ENCODE measurements at regions of chr3 and their contacts with region 1.

Region 1: DNA sequence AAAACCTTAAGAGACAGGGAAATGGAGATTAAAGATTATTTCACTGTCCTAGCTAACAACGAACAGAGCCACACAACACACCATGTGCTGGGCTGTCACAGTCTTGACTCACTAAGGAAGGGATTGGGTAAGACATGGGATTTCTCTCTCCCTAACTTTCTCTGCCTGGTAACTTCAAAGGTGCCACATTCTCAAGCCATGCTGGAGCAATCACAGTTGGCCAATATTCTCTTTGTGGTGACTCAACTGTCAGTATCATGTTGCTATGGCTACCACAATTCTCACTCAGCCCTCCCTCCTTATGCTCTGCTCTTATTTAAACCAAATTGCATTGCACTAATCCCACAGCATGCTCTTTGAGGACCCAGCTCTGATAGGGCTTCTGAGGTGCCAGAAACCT is 74.0 kb downstream of the OXNAD1 start:
- DNase-seq: peak in 4 of 9 experiments; percentile 8 to 79 (median 51)
- ATAC-seq: peak; percentile 64
- H3K4me3 ChIP-seq: no peak overlapping the region
- H3K4me3 Mint-ChIP-seq: no peak overlapping the region
- H3K27ac ChIP-seq: peak overlapping the region; percentile 41 to 72
- H3K27ac Mint-ChIP-seq: peak overlapping the region; percentile 87
- H3K4me1 ChIP-seq: peaks cover 43% of the 10 kb centered on the region
- H3K4me1 Mint-ChIP-seq: peaks cover 83% of the 10 kb centered on the region
- H3K27me3 ChIP-seq: no peaks in the 10 kb centered on the region
- H3K27me3 Mint-ChIP-seq: no peaks in the 10 kb centered on the region
- CTCF ChIP-seq: no peak

Region 2: GRCh38 chr3:15797642-15798303 is 541.2 kb before region 1 on chr3 and contains the start of gene ANKRD28:
- CTCF ChIA-PET with region 1: no interaction called
- POLR2A ChIA-PET with region 1: no interaction called
- intact Hi-C with region 1: no loop called
- DNase-seq: peak in 3 of 9 experiments; percentile 15 to 65 (median 51)
- ATAC-seq: peak; percentile 50
- H3K4me3 ChIP-seq: peak within 1 kb of the TSS in 1 of 2 experiments; percentile 36
- H3K4me3 Mint-ChIP-seq: peak within 1 kb of the TSS; percentile 74
- H3K27ac ChIP-seq: peak within 1 kb of the TSS in 1 of 2 experiments; percentile 72
- H3K27ac Mint-ChIP-seq: peak within 1 kb of the TSS; percentile 80
- H3K4me1 ChIP-seq: peaks cover 40% of the 10 kb centered on the region
- H3K4me1 Mint-ChIP-seq: peaks cover 76% of the 10 kb centered on the region
- H3K27me3 ChIP-seq: no peaks in the 10 kb centered on the region
- H3K27me3 Mint-ChIP-seq: no peaks in the 10 kb centered on the region
- CTCF ChIP-seq: no peak
- total RNA-seq, gene ANKRD28: 35.1 to 39.5 TPM

Region 3: DNA sequence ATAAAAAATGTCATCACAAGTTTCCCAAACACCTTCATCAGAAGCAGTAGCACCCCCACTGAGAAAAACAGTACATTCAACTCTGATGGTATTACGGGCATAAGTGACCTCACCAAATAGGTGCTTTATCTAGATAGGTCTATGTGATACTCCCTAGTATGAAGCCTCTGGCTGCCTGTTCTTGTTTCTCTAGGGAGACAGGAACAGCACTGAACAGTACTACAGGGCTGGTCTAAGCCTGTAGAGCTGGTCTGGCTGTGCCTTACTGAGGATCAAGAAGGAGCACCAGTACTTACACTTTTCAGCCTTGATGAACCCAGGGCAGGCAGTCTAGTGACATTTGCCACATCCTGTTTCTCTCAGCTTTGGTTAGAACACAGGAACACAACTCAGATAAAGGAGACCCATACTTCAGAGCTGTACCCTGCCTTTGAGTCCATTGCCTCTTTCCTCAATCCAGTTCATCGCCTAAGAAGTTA is 38.1 kb before region 1 on chr3:
- CTCF ChIA-PET with region 1: interaction called, 5 read pairs
- POLR2A ChIA-PET with region 1: interaction called, 7 read pairs
- intact Hi-C with region 1: loop called in 1 of 2 experiments (anchors 5 kb)
- DNase-seq: peak in 8 of 9 experiments; percentile 44 to 89 (median 65)
- ATAC-seq: peak; percentile 66
- H3K4me3 ChIP-seq: peak overlapping the region; percentile 20 to 32
- H3K4me3 Mint-ChIP-seq: peak overlapping the region; percentile 87
- H3K27ac ChIP-seq: peak overlapping the region; percentile 37 to 74
- H3K27ac Mint-ChIP-seq: peak overlapping the region; percentile 95
- H3K4me1 ChIP-seq: peaks cover 94% of the 10 kb centered on the region
- H3K4me1 Mint-ChIP-seq: peaks cover 95% of the 10 kb centered on the region
- H3K27me3 ChIP-seq: no peaks in the 10 kb centered on the region
- H3K27me3 Mint-ChIP-seq: no peaks in the 10 kb centered on the region
- CTCF ChIP-seq: no peak

Region 4: GRCh38 chr3:16550676-16551341 is 211.8 kb after region 1 on chr3:
- CTCF ChIA-PET with region 1: interaction called, 3 read pairs
- POLR2A ChIA-PET with region 1: no interaction called
- intact Hi-C with region 1: loop called in 1 of 2 experiments (anchors 5 kb)
- DNase-seq: peak; percentile 51 to 89 (median 73)
- ATAC-seq: peak; percentile 100
- H3K4me3 ChIP-seq: no peak overlapping the region
- H3K4me3 Mint-ChIP-seq: no peak overlapping the region
- H3K27ac ChIP-seq: no peak overlapping the region
- H3K27ac Mint-ChIP-seq: peak overlapping the region; percentile 60
- H3K4me1 ChIP-seq: no peaks in the 10 kb centered on the region
- H3K4me1 Mint-ChIP-seq: peaks cover 3% of the 10 kb centered on the region
- H3K27me3 ChIP-seq: no peaks in the 10 kb centered on the region
- H3K27me3 Mint-ChIP-seq: no peaks in the 10 kb centered on the region
- CTCF ChIP-seq: peak; percentile 87